AG04449 (cell line): ENCODE measurements at regions of chr11 and their contacts with region 1.

Region 1: GRCh38 chr11:102007567-102008437 is 39.4 kb upstream of the CFAP300 start:
- DNase-seq: peak; percentile 24
- H3K4me3 ChIP-seq: no peak overlapping the region
- CTCF ChIP-seq: peak; percentile 21

Region 2: GRCh38 chr11:101456812-101457211 is 551.0 kb before region 1 on chr11:
- CTCF ChIA-PET with region 1: interaction called, 26 read pairs
- POLR2A ChIA-PET with region 1: no interaction called
- DNase-seq: no peak
- H3K4me3 ChIP-seq: no peak overlapping the region
- CTCF ChIP-seq: no peak

Region 3: DNA sequence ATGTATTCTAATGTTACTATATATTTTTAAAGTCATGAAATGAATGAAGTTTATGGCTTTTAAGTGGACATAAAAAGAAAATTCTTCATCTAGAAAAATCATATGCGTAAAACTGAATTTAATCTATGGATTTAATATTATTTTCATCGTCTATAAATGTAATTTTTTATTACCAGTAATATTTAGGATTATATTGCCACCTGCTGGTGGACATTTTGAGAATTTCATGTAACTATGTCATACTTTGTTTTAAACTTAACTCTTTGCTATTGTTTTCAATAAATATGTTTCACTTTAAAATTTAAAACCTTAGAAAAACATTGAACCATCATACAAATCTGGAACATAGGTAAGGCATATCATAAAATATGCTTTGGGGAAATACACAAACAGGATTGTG is 159.5 kb before region 1 on chr11:
- CTCF ChIA-PET with region 1: interaction called, 31 read pairs
- POLR2A ChIA-PET with region 1: no interaction called
- DNase-seq: no peak
- H3K4me3 ChIP-seq: no peak overlapping the region
- CTCF ChIP-seq: no peak

Region 4: DNA sequence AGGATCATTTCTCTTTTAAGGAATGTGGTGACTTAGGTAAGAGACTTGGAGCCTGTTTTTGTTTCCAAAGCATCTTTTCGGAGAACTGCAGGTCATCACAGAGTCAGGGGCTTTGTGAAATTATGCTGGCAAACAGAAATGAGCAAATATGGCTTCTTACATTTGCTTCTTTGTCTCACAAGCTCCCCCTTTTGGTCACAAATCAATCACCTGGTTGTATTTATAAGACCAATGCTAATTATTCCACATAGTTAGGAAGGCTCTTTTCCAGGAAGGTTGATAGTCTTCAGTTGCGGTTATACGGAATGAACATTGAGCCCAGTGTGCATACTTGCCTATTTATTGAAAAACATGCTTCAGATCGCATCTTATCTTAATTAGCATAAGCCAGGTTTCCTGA is 127.6 kb before region 1 on chr11:
- CTCF ChIA-PET with region 1: interaction called, 33 read pairs
- POLR2A ChIA-PET with region 1: no interaction called
- DNase-seq: no peak
- H3K4me3 ChIP-seq: no peak overlapping the region
- CTCF ChIP-seq: peak; percentile 44

Region 5: GRCh38 chr11:101974255-101974654 is 33.5 kb before region 1 on chr11:
- CTCF ChIA-PET with region 1: interaction called, 16 read pairs
- POLR2A ChIA-PET with region 1: no interaction called
- DNase-seq: no peak
- H3K4me3 ChIP-seq: no peak overlapping the region
- CTCF ChIP-seq: peak; percentile 5

Region 6: DNA sequence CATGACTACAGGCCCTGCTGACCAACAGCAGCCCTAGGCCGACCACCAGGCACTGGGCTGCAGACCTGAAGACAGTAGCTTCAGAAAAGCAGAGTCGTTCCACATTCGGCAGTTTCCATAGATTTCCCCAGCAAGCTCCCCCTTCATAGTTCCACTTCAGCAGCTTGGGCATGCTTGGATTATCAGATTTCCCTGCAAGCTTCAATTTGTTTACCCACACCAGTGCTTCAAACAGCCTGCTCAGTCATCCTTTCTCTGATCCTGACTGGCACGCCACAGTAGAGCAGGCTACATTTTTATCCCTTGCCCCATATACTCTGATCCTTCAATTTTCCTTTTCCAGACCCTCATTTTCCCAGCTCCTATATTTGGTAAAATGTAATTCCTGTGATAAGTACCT is 11.7 kb before region 1 on chr11:
- CTCF ChIA-PET with region 1: interaction called, 27 read pairs
- POLR2A ChIA-PET with region 1: no interaction called
- DNase-seq: no peak
- H3K4me3 ChIP-seq: no peak overlapping the region
- CTCF ChIP-seq: no peak